Naive thymus-derived CD8-positive, alpha-beta T cell (primary cell): ENCODE measurements at regions of chr16 and their contacts with region 1.

Region 1: DNA sequence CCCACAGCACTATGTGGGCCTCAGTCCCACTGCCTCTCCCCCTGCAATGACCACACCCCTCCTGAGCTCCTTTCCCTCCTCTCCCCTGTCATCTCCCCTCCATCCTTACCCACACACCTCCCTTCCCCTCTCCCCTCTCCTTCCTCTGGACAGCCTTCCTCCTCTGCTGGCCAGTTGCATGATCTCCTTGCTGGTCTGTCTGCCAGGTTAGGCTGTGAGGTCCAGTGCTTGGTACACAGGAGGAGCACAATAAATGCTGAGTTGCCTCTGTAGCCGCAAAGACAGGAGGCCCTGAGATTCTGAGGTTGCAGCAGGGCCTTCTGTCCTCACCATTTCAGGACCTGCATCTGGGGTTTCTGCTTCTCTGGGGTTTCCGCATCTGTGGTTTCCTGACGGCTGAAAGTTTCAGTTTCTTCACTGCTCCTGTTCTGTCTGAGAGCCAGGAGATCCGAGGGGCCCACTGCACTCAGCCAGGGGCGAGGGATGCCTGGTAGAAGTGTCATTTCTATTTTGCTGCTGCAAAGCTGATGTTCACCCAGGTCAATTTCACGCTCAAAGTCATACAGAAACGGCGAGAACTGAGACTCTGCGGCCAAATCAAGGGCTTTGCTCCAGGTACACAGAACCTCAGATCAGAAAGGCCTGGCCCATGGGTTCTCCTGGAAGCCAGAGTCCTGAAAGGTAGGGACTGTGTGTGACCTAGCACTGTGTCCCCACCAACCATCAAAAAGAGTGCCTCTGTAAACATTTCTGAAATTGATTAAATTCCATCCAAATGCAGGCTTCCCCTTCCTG is 4.6 kb upstream of the SLC12A3 start:
- DNase-seq: peak in 7 of 10 donors; percentile 3 to 62 (median 48)
- ATAC-seq: peak; percentile 95 to 96
- H3K4me3 Mint-ChIP-seq: peak overlapping the region; percentile 61 to 87 (median 74)
- H3K27ac Mint-ChIP-seq: peak overlapping the region; percentile 90 to 97 (median 94)
- H3K4me1 Mint-ChIP-seq: peaks cover 26 to 61% (median 46%) of the 10 kb centered on the region in 4 donors
- H3K27me3 Mint-ChIP-seq: no peaks in the 10 kb centered on the region

Region 2: DNA sequence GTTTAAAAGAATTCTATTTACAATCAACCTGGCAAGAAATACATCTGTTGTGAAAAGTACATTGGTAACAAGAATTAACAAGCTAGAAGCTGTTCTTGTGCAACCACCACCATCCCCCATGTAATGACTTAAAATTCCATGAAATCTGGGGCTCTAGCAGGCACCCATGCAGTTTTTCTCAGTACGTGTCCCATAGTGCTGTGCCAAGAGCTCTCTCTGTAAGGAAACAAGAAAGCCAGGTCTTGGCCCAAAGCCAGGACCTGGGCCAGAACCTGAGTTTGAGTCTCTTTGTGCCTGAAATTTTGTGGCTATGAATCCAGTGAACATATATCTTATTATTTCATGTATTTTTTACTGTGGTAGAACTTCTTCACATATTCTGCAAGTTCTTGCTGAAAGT is 83.9 kb before region 1 on chr16:
- POLR2A ChIA-PET with region 1: no interaction called
- DNase-seq: no peak
- ATAC-seq: no peak
- H3K4me3 Mint-ChIP-seq: no peak overlapping the region
- H3K27ac Mint-ChIP-seq: peak overlapping the region in 1 of 10 donors; percentile 25
- H3K4me1 Mint-ChIP-seq: peaks cover 30 to 51% (median 39%) of the 10 kb centered on the region in 4 donors
- H3K27me3 Mint-ChIP-seq: no peaks in the 10 kb centered on the region

Region 3: DNA sequence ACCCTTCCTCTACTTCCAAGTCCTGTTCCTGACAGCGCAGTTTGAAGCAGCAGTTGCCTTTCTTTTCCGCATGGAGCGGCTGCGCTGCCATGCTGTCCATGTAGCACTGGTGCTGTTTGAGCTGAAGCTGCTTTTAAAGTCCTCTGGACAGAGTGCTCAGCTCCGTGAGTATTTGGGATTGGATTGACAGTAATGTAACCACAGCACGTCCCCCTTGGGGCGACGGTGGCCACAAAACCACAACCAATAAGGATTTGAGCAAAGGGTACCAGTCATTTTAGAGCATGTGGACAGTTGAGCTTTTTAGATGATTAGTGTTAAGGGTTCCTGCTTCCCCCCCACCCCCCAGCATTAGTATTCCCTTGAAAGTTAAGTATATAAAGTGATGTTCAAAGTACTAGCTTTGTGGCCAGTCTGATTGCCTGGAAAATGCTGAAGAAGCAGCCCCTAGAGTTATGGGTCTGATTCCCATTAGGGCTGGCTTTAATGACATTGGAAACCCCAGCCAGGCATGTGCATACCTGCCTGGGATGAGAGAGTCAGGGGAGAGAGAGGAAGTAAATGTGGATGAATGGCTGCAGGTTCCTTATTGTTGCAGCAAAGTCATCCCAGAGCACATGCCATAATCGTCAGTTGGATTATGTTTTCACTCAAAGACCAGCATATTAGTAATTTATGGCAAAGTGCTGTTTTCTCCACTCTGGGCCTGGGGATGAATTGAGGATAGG is 27.0 kb before region 1 on chr16:
- POLR2A ChIA-PET with region 1: interaction called, 10 read pairs
- DNase-seq: no peak
- ATAC-seq: no peak
- H3K4me3 Mint-ChIP-seq: no peak overlapping the region
- H3K27ac Mint-ChIP-seq: peak overlapping the region in 2 of 10 donors; percentile 12 to 81
- H3K4me1 Mint-ChIP-seq: peaks cover 0 to 3% (median 2%) of the 10 kb centered on the region in 4 donors
- H3K27me3 Mint-ChIP-seq: no peaks in the 10 kb centered on the region

Region 4: DNA sequence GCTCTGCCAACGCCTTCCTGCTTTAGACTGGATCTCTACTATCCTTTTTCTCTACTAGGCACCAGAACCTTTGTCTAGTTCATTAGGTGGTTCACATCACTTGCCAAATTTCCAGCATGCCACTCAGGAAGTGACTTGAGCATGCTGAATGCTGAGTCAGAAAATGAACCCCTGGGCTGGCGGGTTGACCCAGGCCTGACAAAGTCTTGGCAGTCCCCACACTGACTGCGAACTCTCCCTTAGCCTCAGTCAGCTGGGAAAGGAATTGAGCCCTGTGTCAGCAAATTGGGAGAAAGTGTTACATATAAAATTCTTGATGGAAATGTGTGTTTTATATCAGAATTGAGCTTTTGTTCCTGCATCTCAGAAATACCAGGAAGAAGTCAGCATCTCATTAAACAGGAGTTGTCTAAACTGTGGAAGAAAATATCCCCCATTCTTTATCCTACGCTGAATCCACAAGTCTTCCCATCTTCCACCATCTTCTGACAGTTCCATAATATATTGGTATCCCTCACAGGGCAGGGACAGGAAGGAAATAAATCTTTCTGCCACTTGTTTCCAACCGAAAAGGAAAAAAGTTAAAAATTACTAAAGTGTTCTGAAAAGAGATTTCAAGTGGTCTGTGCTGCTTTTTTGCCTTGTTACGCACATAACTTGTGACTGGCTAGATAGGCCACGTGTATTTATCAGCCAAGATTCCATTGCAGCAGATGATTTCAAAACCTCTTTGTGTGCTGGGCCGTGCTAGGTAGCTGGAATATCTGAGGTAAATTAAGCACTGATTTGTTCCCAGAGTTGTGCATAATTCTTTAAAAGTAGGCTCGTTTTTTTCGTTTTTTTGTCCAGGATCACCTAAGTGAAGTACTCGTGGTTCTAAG is 12.1 kb before region 1 on chr16:
- POLR2A ChIA-PET with region 1: interaction called, 20 read pairs
- DNase-seq: no peak
- ATAC-seq: no peak
- H3K4me3 Mint-ChIP-seq: peak overlapping the region in 2 of 10 donors; percentile 12 to 14
- H3K27ac Mint-ChIP-seq: peak overlapping the region in 8 of 10 donors; percentile 19 to 95 (median 82)
- H3K4me1 Mint-ChIP-seq: peaks cover 10 to 33% (median 31%) of the 10 kb centered on the region in 4 donors
- H3K27me3 Mint-ChIP-seq: no peaks in the 10 kb centered on the region

Region 5: GRCh38 chr16:56888806-56889205 is 28.4 kb after region 1 on chr16:
- POLR2A ChIA-PET with region 1: no interaction called
- DNase-seq: peak in 1 of 10 donors; percentile 14
- ATAC-seq: no peak
- H3K4me3 Mint-ChIP-seq: no peak overlapping the region
- H3K27ac Mint-ChIP-seq: peak overlapping the region in 1 of 10 donors; percentile 29
- H3K4me1 Mint-ChIP-seq: peaks cover 0 to 9% (median 0%) of the 10 kb centered on the region in 4 donors
- H3K27me3 Mint-ChIP-seq: no peaks in the 10 kb centered on the region